Ascending aorta (tissue), 2 donors: ENCODE measurements at regions of chr3 and their contacts with region 1.

Region 1: DNA sequence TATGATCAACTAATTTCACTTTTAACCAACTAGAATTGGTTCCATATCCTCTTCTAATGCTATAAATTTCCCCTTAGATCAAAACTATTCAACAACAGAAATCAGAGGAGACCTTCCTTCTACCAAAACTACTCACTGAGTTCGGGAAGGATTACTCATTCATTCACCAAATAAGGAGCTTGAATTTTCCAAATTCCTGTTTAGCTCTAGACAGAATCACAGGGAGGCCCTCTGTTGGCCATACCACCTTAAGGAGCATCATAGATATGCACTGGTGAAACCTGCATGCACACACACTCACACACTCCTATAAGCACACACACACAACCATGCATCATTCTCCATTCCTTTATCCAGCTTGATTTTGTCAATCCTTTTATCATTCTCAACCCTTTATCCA is 49.0 kb downstream of the SUCLG2 start:
- DNase-seq: no peak
- H3K4me3 ChIP-seq: no peak overlapping the region
- H3K27ac ChIP-seq: no peak overlapping the region
- H3K4me1 ChIP-seq: peaks cover 0 to 7% of the 10 kb centered on the region in 2 donors
- H3K27me3 ChIP-seq: no peaks in the 10 kb centered on the region
- CTCF ChIP-seq: peak in 2 of 3 experiments; percentile 9 to 39

Region 2: GRCh38 chr3:67228141-67228540 is 377.2 kb before region 1 on chr3:
- intact Hi-C with region 1: no loop called
- DNase-seq: no peak
- H3K4me3 ChIP-seq: no peak overlapping the region
- H3K27ac ChIP-seq: no peak overlapping the region
- H3K4me1 ChIP-seq: no peaks in the 10 kb centered on the region
- H3K27me3 ChIP-seq: no peaks in the 10 kb centered on the region
- CTCF ChIP-seq: no peak

Region 3: GRCh38 chr3:67384760-67385397 is 220.5 kb before region 1 on chr3:
- intact Hi-C with region 1: loop called (anchors 5 kb)
- DNase-seq: no peak
- H3K4me3 ChIP-seq: no peak overlapping the region
- H3K27ac ChIP-seq: no peak overlapping the region
- H3K4me1 ChIP-seq: peaks cover 0 to 25% of the 10 kb centered on the region in 2 donors
- H3K27me3 ChIP-seq: no peaks in the 10 kb centered on the region
- CTCF ChIP-seq: peak in 1 of 3 experiments; percentile 27

Region 4: DNA sequence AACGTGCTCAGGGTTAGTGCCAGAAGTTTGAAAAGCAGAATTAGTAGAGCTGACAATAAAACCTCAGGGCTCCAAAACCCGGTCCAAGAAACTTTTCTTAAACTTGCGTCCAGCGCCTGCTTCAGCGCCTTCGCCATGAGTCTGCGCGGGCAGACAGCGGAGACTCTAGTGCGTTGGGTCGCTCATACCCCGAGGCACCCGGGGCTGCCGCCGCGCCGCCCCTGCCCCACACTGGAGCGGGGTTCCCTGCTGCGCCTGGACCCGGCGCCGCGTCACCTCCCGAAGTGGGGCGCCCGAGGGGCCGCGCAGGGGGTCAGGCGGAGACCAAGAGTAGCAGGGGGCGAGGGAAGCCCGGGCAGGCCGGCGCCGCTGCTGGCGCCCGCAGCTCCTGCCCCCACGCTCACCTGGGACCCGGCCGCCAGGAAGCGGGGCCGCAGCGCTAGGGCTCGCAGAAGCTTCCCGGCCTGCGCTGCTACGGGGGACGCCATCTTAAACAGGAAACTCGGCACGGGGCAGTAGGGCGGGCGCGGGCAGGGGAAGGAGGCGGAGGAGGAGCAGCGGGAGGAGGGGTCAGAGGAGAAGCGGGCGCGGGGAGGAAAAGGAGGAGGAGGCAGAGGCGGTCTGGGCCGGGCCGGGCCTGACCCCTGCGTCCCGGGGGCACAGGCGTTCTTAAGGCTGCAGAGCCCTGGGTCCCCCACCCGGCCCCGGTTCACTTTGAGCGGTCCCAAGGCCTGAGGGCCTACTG is 48.9 kb after region 1 on chr3 and contains the start of gene SUCLG2:
- intact Hi-C with region 1: loop called (anchors 5 kb)
- DNase-seq: peak; percentile 62 to 95
- H3K4me3 ChIP-seq: peak within 1 kb of the TSS; percentile 84 to 86
- H3K27ac ChIP-seq: peak within 1 kb of the TSS; percentile 92 to 99
- H3K4me1 ChIP-seq: peaks cover 4 to 14% of the 10 kb centered on the region in 2 donors
- H3K27me3 ChIP-seq: no peaks in the 10 kb centered on the region
- CTCF ChIP-seq: no peak
- total RNA-seq, gene SUCLG2: 33.6 TPM